Thyroid gland (tissue), 4 donors: ENCODE measurements at regions of chr12 and their contacts with region 1.

Region 1: DNA sequence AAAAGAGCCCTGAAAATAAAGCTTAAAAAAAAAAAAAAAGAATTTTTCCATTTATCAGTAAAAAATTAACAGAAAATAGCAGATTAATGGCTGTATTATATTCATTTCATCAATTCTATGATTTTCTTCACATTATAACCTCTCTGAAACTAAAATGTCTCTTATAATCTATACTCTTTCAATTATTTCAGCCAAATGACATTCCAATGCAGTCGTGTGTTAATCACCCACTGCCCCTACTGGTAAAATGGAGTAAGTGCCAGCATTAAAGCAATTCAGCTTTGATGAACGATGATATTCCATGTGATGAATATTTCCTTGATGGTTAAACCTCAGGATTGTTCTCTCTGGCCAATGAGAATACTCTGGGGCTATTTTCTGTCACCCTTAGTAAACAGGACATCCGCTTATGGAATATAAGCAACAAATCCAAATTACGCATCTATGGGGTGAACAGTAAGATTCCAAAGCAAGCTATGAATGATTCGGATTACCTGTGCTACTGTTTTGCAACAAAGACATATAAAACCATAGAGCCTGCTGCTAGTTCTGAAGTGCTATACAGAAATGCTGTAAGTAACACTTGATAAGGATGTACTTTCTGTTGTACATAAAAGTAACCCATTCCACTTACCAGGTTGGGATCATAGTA is 20.3 kb upstream of the SYCP3 start:
- DNase-seq: no peak
- H3K4me3 ChIP-seq: no peak overlapping the region
- H3K27ac ChIP-seq: no peak overlapping the region
- H3K4me1 ChIP-seq: peaks cover 7 to 12% of the 10 kb centered on the region in 2 donors
- H3K27me3 ChIP-seq: no peaks in the 10 kb centered on the region
- CTCF ChIP-seq: peak; percentile 49 to 88 (median 76)
- POLR2A ChIP-seq: no peak

Region 2: GRCh38 chr12:101570047-101570446 is 189.5 kb before region 1 on chr12:
- intact Hi-C with region 1: loop called (anchors 10 kb)
- DNase-seq: no peak
- H3K4me3 ChIP-seq: no peak overlapping the region
- H3K27ac ChIP-seq: no peak overlapping the region
- H3K4me1 ChIP-seq: no peaks in the 10 kb centered on the region
- H3K27me3 ChIP-seq: no peaks in the 10 kb centered on the region
- CTCF ChIP-seq: peak in 4 of 6 experiments; percentile 38 to 65 (median 50)
- POLR2A ChIP-seq: no peak

Region 3: GRCh38 chr12:101670007-101670687 is 89.4 kb before region 1 on chr12:
- intact Hi-C with region 1: loop called (anchors 10 kb)
- DNase-seq: peak; percentile 11 to 19
- H3K4me3 ChIP-seq: no peak overlapping the region
- H3K27ac ChIP-seq: no peak overlapping the region
- H3K4me1 ChIP-seq: no peaks in the 10 kb centered on the region
- H3K27me3 ChIP-seq: no peaks in the 10 kb centered on the region
- CTCF ChIP-seq: peak in 4 of 6 experiments; percentile 48 to 58 (median 52)
- POLR2A ChIP-seq: no peak

Region 4: GRCh38 chr12:101727133-101727532 is 32.4 kb before region 1 on chr12:
- intact Hi-C with region 1: no loop called
- DNase-seq: no peak
- H3K4me3 ChIP-seq: no peak overlapping the region
- H3K27ac ChIP-seq: peak overlapping the region in 2 of 3 donors; percentile 4 to 15
- H3K4me1 ChIP-seq: no peaks in the 10 kb centered on the region
- H3K27me3 ChIP-seq: no peaks in the 10 kb centered on the region
- CTCF ChIP-seq: no peak
- POLR2A ChIP-seq: no peak

Region 5: GRCh38 chr12:101792051-101792931 is 32.8 kb after region 1 on chr12:
- intact Hi-C with region 1: no loop called
- DNase-seq: no peak
- H3K4me3 ChIP-seq: no peak overlapping the region
- H3K27ac ChIP-seq: no peak overlapping the region
- H3K4me1 ChIP-seq: no peaks in the 10 kb centered on the region
- H3K27me3 ChIP-seq: no peaks in the 10 kb centered on the region
- CTCF ChIP-seq: peak in 1 of 6 experiments; percentile 17
- POLR2A ChIP-seq: no peak

Region 6: GRCh38 chr12:101859664-101860607 is 100.4 kb after region 1 on chr12:
- intact Hi-C with region 1: no loop called
- DNase-seq: no peak
- H3K4me3 ChIP-seq: no peak overlapping the region
- H3K27ac ChIP-seq: no peak overlapping the region
- H3K4me1 ChIP-seq: no peaks in the 10 kb centered on the region
- H3K27me3 ChIP-seq: no peaks in the 10 kb centered on the region
- CTCF ChIP-seq: no peak
- POLR2A ChIP-seq: no peak